Aorta (tissue), 5 donors: ENCODE measurements at regions of chr11 and their contacts with region 1.

Region 1: GRCh38 chr11:35144136-35144741 is 5.3 kb downstream of the CD44 start:
- DNase-seq: peak; percentile 56 to 75
- ATAC-seq: no peak
- H3K4me3 ChIP-seq: no peak overlapping the region
- H3K27ac ChIP-seq: peak overlapping the region in 1 of 2 donors; percentile 65
- H3K4me1 ChIP-seq: peaks cover 1 to 15% of the 10 kb centered on the region in 2 donors
- H3K27me3 ChIP-seq: no peaks in the 10 kb centered on the region

Region 2: GRCh38 chr11:35100013-35100383 is 44.2 kb before region 1 on chr11:
- intact Hi-C with region 1: loop called (anchors 5 kb)
- DNase-seq: peak in 1 of 2 donors; percentile 75
- ATAC-seq: peak; percentile 91
- H3K4me3 ChIP-seq: no peak overlapping the region
- H3K27ac ChIP-seq: peak overlapping the region; percentile 12 to 93
- H3K4me1 ChIP-seq: peaks cover 9 to 10% of the 10 kb centered on the region in 2 donors
- H3K27me3 ChIP-seq: no peaks in the 10 kb centered on the region

Region 3: GRCh38 chr11:35174666-35175065 is 30.4 kb after region 1 on chr11:
- intact Hi-C with region 1: loop called in 1 of 2 experiments (anchors 5 kb)
- DNase-seq: no peak
- ATAC-seq: no peak
- H3K4me3 ChIP-seq: no peak overlapping the region
- H3K27ac ChIP-seq: no peak overlapping the region
- H3K4me1 ChIP-seq: peaks cover 15 to 32% of the 10 kb centered on the region in 2 donors
- H3K27me3 ChIP-seq: no peaks in the 10 kb centered on the region